CD4-positive, alpha-beta T cell (primary cell): ENCODE measurements at regions of chr6 and their contacts with region 1.

Region 1: GRCh38 chr6:26156076-26156849 is 69.0 kb downstream of the HFE start:
- DNase-seq: peak; percentile 76 to 94 (median 88)
- ATAC-seq: peak; percentile 33
- H3K4me3 ChIP-seq: peak overlapping the region; percentile 92
- H3K4me3 Mint-ChIP-seq: peak overlapping the region; percentile 99
- H3K27ac ChIP-seq: peak overlapping the region; percentile 67 to 91
- H3K27ac Mint-ChIP-seq: peak overlapping the region; percentile 97
- H3K4me1 ChIP-seq: peaks cover 37% of the 10 kb centered on the region
- H3K4me1 Mint-ChIP-seq: peaks cover 40% of the 10 kb centered on the region
- H3K27me3 ChIP-seq: no peaks in the 10 kb centered on the region
- H3K27me3 Mint-ChIP-seq: peaks cover 12% of the 10 kb centered on the region
- CTCF ChIP-seq: no peak

Region 2: DNA sequence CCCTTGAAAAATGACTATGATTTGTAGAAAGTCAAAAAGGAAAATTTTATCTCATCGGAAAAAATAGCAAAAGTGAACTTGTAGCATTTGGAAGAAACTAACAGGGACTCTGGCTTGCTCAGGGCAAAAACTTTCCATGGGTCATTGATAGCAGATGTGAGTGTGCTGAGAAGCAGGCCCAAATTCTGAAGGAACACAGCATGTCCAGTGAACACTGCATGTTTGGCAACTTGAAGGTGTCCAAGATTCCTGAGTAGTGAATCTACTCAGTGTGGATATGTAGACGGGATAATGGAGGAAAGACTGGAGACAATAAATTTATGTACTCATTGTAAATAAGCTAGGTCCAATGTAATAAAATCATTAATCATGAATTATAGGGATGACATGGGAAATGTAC is 234.0 kb before region 1 on chr6:
- CTCF ChIA-PET with region 1: no interaction called
- POLR2A ChIA-PET with region 1: no interaction called
- intact Hi-C with region 1: no loop called
- DNase-seq: no peak
- ATAC-seq: no peak
- H3K4me3 ChIP-seq: no peak overlapping the region
- H3K4me3 Mint-ChIP-seq: no peak overlapping the region
- H3K27ac ChIP-seq: no peak overlapping the region
- H3K27ac Mint-ChIP-seq: no peak overlapping the region
- H3K4me1 ChIP-seq: no peaks in the 10 kb centered on the region
- H3K4me1 Mint-ChIP-seq: no peaks in the 10 kb centered on the region
- H3K27me3 ChIP-seq: no peaks in the 10 kb centered on the region
- H3K27me3 Mint-ChIP-seq: no peaks in the 10 kb centered on the region
- CTCF ChIP-seq: no peak

Region 3: GRCh38 chr6:26065952-26066380 is 90.3 kb before region 1 on chr6:
- CTCF ChIA-PET with region 1: no interaction called
- POLR2A ChIA-PET with region 1: interaction called, 58 read pairs
- intact Hi-C with region 1: loop called (anchors 2 to 10 kb)
- DNase-seq: peak in 11 of 14 experiments; percentile 14 to 87 (median 39)
- ATAC-seq: peak; percentile 93
- H3K4me3 ChIP-seq: no peak overlapping the region
- H3K4me3 Mint-ChIP-seq: no peak overlapping the region
- H3K27ac ChIP-seq: no peak overlapping the region
- H3K27ac Mint-ChIP-seq: no peak overlapping the region
- H3K4me1 ChIP-seq: peaks cover 3% of the 10 kb centered on the region
- H3K4me1 Mint-ChIP-seq: peaks cover 11% of the 10 kb centered on the region
- H3K27me3 ChIP-seq: no peaks in the 10 kb centered on the region
- H3K27me3 Mint-ChIP-seq: no peaks in the 10 kb centered on the region
- CTCF ChIP-seq: peak; percentile 85

Region 4: DNA sequence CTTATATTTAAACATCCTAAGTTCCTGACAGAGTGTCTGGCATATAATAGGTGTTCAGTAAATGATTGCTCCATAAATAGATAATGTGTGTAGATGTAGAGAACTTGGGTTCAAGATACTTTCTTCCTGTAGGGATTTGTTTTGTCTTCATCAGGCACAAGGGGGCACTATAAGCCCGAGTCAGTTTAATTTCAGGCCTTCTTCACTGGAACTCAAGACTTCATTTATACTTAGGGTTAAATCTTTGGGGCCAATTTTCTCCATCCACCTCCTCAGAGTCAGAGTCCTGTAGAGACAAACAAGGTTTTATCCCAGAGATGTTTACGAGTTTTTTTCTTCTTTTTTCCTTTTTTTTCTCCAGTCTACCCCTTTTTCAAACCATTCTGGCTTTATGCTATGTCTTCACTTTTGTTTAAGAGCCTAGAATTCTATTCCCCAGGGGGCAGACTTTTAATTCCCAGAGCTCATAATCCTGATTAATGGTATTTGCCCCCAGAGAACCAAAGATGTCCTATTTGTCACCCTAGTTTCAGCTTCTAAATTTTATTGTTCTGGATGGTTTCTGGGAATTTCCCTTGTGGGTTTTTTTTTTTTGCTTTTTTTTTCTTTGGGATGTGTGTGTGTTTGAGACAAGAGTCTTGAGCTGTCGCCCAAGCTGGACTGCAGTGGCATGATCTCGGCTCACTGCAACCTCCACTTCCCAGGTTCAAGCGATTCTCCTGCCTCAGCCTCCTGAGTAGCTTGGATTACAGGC is 19.3 kb after region 1 on chr6:
- CTCF ChIA-PET with region 1: interaction called, 5 read pairs
- POLR2A ChIA-PET with region 1: interaction called, 821 read pairs
- intact Hi-C with region 1: loop called (anchors 1 kb)
- DNase-seq: peak in 11 of 14 experiments; percentile 13 to 85 (median 54)
- ATAC-seq: no peak
- H3K4me3 ChIP-seq: no peak overlapping the region
- H3K4me3 Mint-ChIP-seq: peak overlapping the region; percentile 83
- H3K27ac ChIP-seq: peak overlapping the region in 1 of 2 donors; percentile 41
- H3K27ac Mint-ChIP-seq: peak overlapping the region; percentile 93
- H3K4me1 ChIP-seq: peaks cover 17% of the 10 kb centered on the region
- H3K4me1 Mint-ChIP-seq: peaks cover 53% of the 10 kb centered on the region
- H3K27me3 ChIP-seq: no peaks in the 10 kb centered on the region
- H3K27me3 Mint-ChIP-seq: no peaks in the 10 kb centered on the region
- CTCF ChIP-seq: peak; percentile 87

Region 5: GRCh38 chr6:26240154-26241032 is 84.1 kb after region 1 on chr6:
- CTCF ChIA-PET with region 1: no interaction called
- POLR2A ChIA-PET with region 1: interaction called, 365 read pairs
- intact Hi-C with region 1: no loop called
- DNase-seq: peak; percentile 45 to 96 (median 64)
- ATAC-seq: peak; percentile 76
- H3K4me3 ChIP-seq: peak overlapping the region; percentile 66
- H3K4me3 Mint-ChIP-seq: peak overlapping the region; percentile 84
- H3K27ac ChIP-seq: peak overlapping the region; percentile 78 to 90
- H3K27ac Mint-ChIP-seq: peak overlapping the region; percentile 96
- H3K4me1 ChIP-seq: peaks cover 17% of the 10 kb centered on the region
- H3K4me1 Mint-ChIP-seq: peaks cover 23% of the 10 kb centered on the region
- H3K27me3 ChIP-seq: no peaks in the 10 kb centered on the region
- H3K27me3 Mint-ChIP-seq: no peaks in the 10 kb centered on the region
- CTCF ChIP-seq: no peak

Region 6: GRCh38 chr6:26537846-26538571 is 381.7 kb after region 1 on chr6 and contains the start of gene HMGN4:
- CTCF ChIA-PET with region 1: no interaction called
- POLR2A ChIA-PET with region 1: interaction called, 23 read pairs
- intact Hi-C with region 1: no loop called
- DNase-seq: peak; percentile 66 to 97 (median 76)
- ATAC-seq: peak; percentile 70
- H3K4me3 ChIP-seq: peak within 1 kb of the TSS; percentile 93
- H3K4me3 Mint-ChIP-seq: peak within 1 kb of the TSS; percentile 94
- H3K27ac ChIP-seq: peak within 1 kb of the TSS; percentile 84 to 91
- H3K27ac Mint-ChIP-seq: peak within 1 kb of the TSS; percentile 98
- H3K4me1 ChIP-seq: peaks cover 51% of the 10 kb centered on the region
- H3K4me1 Mint-ChIP-seq: peaks cover 57% of the 10 kb centered on the region
- H3K27me3 ChIP-seq: no peaks in the 10 kb centered on the region
- H3K27me3 Mint-ChIP-seq: peaks cover 13% of the 10 kb centered on the region
- CTCF ChIP-seq: no peak
- total RNA-seq, gene HMGN4: 22.7 to 24.8 TPM

Region 7: DNA sequence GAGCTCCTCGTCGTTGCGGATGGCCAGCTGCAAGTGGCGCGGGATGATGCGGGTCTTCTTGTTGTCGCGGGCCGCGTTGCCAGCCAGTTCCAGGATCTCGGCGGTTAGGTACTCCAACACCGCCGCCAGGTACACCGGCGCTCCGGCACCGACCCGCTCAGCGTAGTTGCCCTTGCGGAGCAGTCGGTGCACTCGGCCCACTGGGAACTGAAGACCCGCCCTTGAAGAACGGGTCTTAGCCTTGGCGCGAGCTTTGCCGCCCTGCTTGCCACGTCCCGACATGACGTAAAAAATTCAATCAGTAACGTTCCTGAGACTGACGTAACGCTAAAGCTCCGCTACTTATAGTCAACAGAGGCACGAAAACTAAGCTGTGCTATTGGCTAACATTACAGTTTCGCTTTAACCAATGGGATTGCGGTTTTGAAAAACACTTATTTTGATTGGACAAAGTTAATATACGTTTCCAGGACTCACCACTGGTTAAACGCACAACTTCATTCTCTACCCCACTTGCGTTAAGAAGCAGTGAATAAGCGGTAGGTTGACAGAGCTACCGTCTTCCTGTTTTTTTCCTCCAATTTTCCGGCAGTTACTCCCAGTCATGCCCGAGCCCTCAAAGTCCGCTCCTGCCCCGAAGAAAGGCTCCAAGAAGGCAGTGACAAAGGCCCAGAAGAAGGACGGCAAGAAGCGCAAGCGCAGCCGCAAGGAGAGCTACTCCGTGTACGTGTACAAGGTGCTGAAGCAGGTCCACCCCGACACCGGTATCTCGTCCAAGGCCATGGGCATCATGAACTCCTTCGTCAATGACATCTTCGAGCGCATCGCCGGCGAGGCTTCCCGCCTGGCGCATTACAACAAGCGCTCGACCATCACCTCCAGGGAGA is 1682.0 kb after region 1 on chr6:
- CTCF ChIA-PET with region 1: no interaction called
- POLR2A ChIA-PET with region 1: interaction called, 130 read pairs
- intact Hi-C with region 1: no loop called
- DNase-seq: peak; percentile 52 to 98 (median 73)
- ATAC-seq: peak; percentile 73
- H3K4me3 ChIP-seq: peak overlapping the region; percentile 83
- H3K4me3 Mint-ChIP-seq: no peak overlapping the region
- H3K27ac ChIP-seq: peak overlapping the region; percentile 92 to 97
- H3K27ac Mint-ChIP-seq: no peak overlapping the region
- H3K4me1 ChIP-seq: peaks cover 32% of the 10 kb centered on the region
- H3K4me1 Mint-ChIP-seq: peaks cover 6% of the 10 kb centered on the region
- H3K27me3 ChIP-seq: peaks cover 0 to 6% of the 10 kb centered on the region in 2 experiments
- H3K27me3 Mint-ChIP-seq: peaks cover 12% of the 10 kb centered on the region
- CTCF ChIP-seq: no peak